ENCODE measurements at regions of chr17 and their contacts with region 1.

Region 1: DNA sequence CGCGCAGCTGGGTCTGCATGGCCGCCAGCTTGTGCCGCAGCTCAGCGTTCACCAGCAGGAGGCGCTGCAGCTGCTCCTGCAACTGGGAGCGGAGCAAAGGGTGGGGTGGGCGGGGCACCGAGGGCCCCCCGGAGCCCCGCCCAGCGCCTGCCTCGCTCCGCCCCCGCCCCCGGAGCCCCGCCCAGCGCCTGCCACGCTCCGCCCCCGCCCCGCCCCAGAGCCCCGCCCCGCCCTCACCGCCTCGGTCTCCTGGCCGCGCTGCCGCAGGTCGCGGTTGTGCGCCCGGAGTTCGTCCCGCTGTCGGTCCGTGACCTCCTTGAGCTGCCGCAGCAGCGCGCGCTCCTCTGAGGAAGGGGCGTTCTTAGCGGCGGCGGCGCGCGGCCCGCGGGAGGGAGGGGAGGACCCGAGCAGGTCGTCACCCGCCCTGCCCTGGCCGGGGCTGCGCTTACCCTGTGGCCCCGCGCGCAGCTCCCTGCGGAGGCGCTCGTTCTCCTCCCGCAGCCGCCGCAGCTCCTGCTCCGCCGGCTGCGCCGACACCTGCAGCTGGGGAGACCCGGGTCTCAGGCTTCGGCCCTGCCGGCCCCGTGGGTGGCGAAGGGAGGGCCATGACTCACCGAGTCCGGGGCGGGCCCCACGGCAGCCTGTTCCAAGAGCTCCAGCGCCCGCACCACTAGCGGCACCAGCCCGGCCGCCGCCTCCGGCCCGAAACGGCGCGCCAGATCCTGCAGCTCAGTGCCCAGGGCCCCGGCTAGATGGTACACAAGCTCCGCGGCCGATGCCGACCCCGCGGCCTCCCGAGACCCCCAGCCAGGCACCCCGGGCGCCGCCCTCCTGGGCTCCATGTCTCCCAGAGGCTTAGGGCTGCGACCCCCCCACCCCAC is 463 bp downstream of the RILP start:
- DNase-seq: peak; percentile 95
- H3K4me3 Mint-ChIP-seq: peak overlapping the region; percentile 54
- H3K27ac Mint-ChIP-seq: no peak overlapping the region
- H3K4me1 Mint-ChIP-seq: peaks cover 26% of the 10 kb centered on the region
- H3K27me3 Mint-ChIP-seq: no peaks in the 10 kb centered on the region

Region 2: GRCh38 chr17:1684378-1685189 is 35.4 kb after region 1 on chr17 and contains the start of gene PRPF8:
- CTCF ChIA-PET with region 1: interaction called, 8 read pairs
- POLR2A ChIA-PET with region 1: interaction called, 8 read pairs
- intact Hi-C with region 1: loop called (anchors 2 kb)
- DNase-seq: peak; percentile 99
- H3K4me3 Mint-ChIP-seq: peak within 1 kb of the TSS; percentile 99
- H3K27ac Mint-ChIP-seq: peak within 1 kb of the TSS; percentile 95
- H3K4me1 Mint-ChIP-seq: peaks cover 30% of the 10 kb centered on the region
- H3K27me3 Mint-ChIP-seq: no peaks in the 10 kb centered on the region
- total RNA-seq, gene PRPF8: 370 to 378 TPM

Measured in activated CD4-positive, alpha-beta memory T cell treated with anti-CD3 and anti-CD28 coated beads for 36 hours (primary cell).